Psoas muscle (tissue), 8 donors: ENCODE measurements at regions of chr11 and their contacts with region 1.

Region 1: GRCh38 chr11:723120-723883 is 17.3 kb downstream of the EPS8L2 start:
- DNase-seq: peak in 1 of 2 donors; percentile 31
- ATAC-seq: peak in 2 of 4 donors; percentile 25 to 29
- H3K4me3 ChIP-seq: no peak overlapping the region
- H3K27ac ChIP-seq: no peak overlapping the region
- H3K4me1 ChIP-seq: peaks cover 14% of the 10 kb centered on the region
- H3K27me3 ChIP-seq: peaks cover 0 to 80% (median 39%) of the 10 kb centered on the region in 3 donors
- CTCF ChIP-seq: peak; percentile 56

Region 2: DNA sequence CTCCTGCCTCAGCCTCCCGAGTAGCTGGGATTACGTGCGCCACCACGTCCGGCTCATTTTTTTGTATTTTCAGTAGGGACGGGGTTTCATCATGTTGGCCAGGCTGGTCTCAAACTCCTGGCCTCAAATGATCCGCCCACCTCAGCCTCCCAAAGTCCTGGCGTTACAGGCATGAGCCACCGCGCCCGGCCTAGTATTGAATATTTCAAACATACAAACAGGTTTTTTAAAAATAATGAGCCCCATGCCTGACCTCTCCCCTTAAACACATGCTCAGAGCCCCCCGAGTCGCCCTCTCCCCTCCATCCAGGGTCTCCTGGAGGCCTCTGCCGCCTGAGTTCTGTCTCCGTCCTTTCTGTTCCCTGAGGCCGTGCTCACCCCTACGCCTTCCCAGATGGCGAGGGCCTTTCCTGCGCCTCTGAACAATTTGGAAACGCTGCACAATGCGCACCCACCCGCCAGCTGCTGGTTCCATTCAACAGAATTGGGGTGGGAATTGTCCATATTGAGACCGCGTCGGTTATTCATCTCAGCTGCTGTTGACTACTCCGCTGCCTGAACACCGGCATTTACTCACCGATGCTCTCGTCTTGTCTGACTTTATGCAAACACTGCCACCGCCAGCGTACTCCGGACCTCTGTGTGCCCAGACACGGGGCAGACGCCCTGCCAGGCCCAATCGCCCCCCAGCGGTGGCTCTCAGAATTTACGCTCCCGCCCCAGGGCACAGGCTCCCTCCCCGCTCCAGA is 202.7 kb before region 1 on chr11:
- intact Hi-C with region 1: no loop called
- DNase-seq: peak in 1 of 2 donors; percentile 53
- ATAC-seq: no peak
- H3K4me3 ChIP-seq: no peak overlapping the region
- H3K27ac ChIP-seq: no peak overlapping the region
- H3K4me1 ChIP-seq: peaks cover 3% of the 10 kb centered on the region
- H3K27me3 ChIP-seq: no peaks in the 10 kb centered on the region
- CTCF ChIP-seq: no peak

Region 3: GRCh38 chr11:554824-555472 is 168.4 kb before region 1 on chr11:
- intact Hi-C with region 1: loop called (anchors 2 kb)
- DNase-seq: peak; percentile 64 to 79
- ATAC-seq: peak; percentile 68 to 88 (median 80)
- H3K4me3 ChIP-seq: peak overlapping the region; percentile 49
- H3K27ac ChIP-seq: no peak overlapping the region
- H3K4me1 ChIP-seq: peaks cover 5% of the 10 kb centered on the region
- H3K27me3 ChIP-seq: peaks cover 0 to 64% (median 36%) of the 10 kb centered on the region in 3 donors
- CTCF ChIP-seq: peak; percentile 54

Region 4: DNA sequence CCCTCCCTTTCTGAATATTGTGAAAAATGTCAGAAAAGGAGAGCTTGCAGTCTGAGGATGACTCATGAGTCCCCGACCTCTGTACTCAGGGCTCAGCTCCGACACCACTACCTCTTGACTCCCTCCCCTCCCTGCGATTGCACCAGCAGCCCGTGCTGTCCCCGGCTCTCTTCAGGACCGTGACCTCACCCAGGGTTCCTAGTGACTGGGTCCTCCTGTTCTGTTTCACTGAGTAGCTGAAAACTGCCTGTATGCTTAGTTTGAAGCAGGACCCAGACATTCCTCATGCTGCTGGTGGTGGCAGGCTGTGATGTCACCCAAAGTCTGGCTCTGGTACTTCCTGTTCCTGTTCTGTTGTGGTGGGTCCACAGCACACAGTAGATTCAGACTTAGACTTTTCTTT is 135.3 kb before region 1 on chr11:
- intact Hi-C with region 1: no loop called
- DNase-seq: peak in 1 of 2 donors; percentile 58
- ATAC-seq: peak in 3 of 4 donors; percentile 56 to 68 (median 56)
- H3K4me3 ChIP-seq: no peak overlapping the region
- H3K27ac ChIP-seq: no peak overlapping the region
- H3K4me1 ChIP-seq: no peaks in the 10 kb centered on the region
- H3K27me3 ChIP-seq: no peaks in the 10 kb centered on the region
- CTCF ChIP-seq: no peak

Region 5: GRCh38 chr11:662689-663274 is 60.5 kb before region 1 on chr11:
- intact Hi-C with region 1: loop called (anchors 2 to 5 kb)
- DNase-seq: peak; percentile 69 to 81
- ATAC-seq: peak; percentile 51 to 70 (median 68)
- H3K4me3 ChIP-seq: no peak overlapping the region
- H3K27ac ChIP-seq: no peak overlapping the region
- H3K4me1 ChIP-seq: peaks cover 4% of the 10 kb centered on the region
- H3K27me3 ChIP-seq: no peaks in the 10 kb centered on the region
- CTCF ChIP-seq: peak; percentile 57

Region 6: DNA sequence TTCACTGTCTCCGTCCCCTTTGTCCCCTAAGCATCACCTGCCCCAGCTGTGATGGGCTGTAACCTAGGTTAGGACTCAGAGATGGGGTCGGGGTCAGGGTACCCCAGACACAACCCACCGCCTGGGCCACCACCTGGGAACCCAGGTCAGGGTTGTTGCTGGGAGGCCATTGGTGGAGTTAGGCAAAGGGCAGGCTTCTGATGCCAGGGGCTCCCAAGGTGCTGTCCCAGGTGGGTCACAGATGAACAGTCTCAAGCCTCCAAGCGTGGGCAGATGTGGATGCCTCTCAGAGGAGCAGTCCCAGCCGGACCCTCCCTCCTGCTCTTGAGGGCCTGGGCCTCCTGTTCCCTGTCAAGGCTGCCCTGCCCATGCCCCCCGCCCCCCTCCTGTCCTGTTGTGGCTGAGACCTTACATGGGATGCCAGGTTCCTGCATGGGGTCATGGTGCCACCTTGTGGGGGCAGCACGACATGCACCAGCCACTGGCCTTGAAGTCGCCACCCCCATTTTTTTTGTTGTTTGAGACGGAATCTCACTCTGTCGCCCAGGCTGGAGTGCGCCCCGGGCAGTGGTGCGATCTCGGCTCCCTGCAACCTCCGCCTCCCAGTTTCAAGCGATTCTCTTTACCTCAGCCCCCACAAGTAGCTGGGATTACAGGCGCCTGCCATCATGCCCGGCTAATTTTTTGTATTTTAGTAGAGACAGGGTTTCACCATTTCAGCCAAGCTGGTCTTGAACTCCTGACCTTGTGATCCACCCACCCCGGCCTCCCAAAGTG is 41.9 kb after region 1 on chr11:
- intact Hi-C with region 1: loop called in 1 of 2 experiments (anchors 1 kb)
- DNase-seq: peak; percentile 57 to 83
- ATAC-seq: peak; percentile 70 to 82 (median 72)
- H3K4me3 ChIP-seq: no peak overlapping the region
- H3K27ac ChIP-seq: no peak overlapping the region
- H3K4me1 ChIP-seq: peaks cover 4% of the 10 kb centered on the region
- H3K27me3 ChIP-seq: no peaks in the 10 kb centered on the region
- CTCF ChIP-seq: peak; percentile 57